ENCODE measurements at regions of chr2 and their contacts with region 1.

Region 1: GRCh38 chr2:231601349-231602229 is 8.9 kb downstream of the TEX44 start:
- DNase-seq: peak; percentile 88
- H3K4me3 Mint-ChIP-seq: no peak overlapping the region
- H3K27ac Mint-ChIP-seq: no peak overlapping the region
- H3K4me1 Mint-ChIP-seq: peaks cover 17% of the 10 kb centered on the region
- H3K27me3 Mint-ChIP-seq: peaks cover 14% of the 10 kb centered on the region

Region 2: GRCh38 chr2:231482806-231483391 is 118.7 kb before region 1 on chr2:
- CTCF ChIA-PET with region 1: interaction called, 16 read pairs
- DNase-seq: peak; percentile 81
- H3K4me3 Mint-ChIP-seq: peak overlapping the region; percentile 77
- H3K27ac Mint-ChIP-seq: peak overlapping the region; percentile 92
- H3K4me1 Mint-ChIP-seq: peaks cover 29% of the 10 kb centered on the region
- H3K27me3 Mint-ChIP-seq: peaks cover 15% of the 10 kb centered on the region

Region 3: GRCh38 chr2:231519975-231520555 is 81.5 kb before region 1 on chr2:
- CTCF ChIA-PET with region 1: interaction called, 64 read pairs
- DNase-seq: no peak
- H3K4me3 Mint-ChIP-seq: no peak overlapping the region
- H3K27ac Mint-ChIP-seq: no peak overlapping the region
- H3K4me1 Mint-ChIP-seq: peaks cover 43% of the 10 kb centered on the region
- H3K27me3 Mint-ChIP-seq: peaks cover 66% of the 10 kb centered on the region

Region 4: GRCh38 chr2:231557571-231558237 is 43.9 kb before region 1 on chr2:
- CTCF ChIA-PET with region 1: interaction called, 60 read pairs
- DNase-seq: peak; percentile 75
- H3K4me3 Mint-ChIP-seq: no peak overlapping the region
- H3K27ac Mint-ChIP-seq: no peak overlapping the region
- H3K4me1 Mint-ChIP-seq: peaks cover 31% of the 10 kb centered on the region
- H3K27me3 Mint-ChIP-seq: peaks cover 38% of the 10 kb centered on the region

Region 5: DNA sequence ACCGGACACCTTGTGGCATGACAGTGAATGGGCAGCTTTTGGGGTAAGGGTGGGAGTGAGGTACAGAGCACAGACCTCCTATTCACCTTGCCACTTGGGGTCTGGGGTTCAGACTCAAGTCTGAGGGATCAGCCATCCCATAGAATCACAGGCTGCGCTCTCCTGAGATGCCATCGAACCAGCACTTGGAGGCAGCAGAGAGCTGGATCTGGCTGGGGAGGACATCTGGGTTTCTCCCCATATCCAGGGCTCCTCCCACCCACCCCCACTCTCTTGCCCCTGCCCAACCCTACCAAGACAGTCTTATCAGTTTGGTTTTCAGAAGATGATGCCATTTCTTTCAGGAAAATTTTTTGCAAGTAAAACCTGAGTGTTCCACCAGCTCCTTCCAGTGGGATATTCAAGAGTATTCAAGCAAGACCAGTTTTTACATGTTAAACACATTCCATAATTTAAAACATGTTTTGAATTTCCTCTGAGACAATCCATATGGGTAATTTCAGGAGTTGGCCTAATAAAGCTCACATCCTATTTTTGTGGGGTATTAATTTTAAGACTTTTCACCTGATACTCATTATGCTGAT is 38.1 kb before region 1 on chr2:
- CTCF ChIA-PET with region 1: interaction called, 60 read pairs
- DNase-seq: peak; percentile 62
- H3K4me3 Mint-ChIP-seq: no peak overlapping the region
- H3K27ac Mint-ChIP-seq: no peak overlapping the region
- H3K4me1 Mint-ChIP-seq: peaks cover 9% of the 10 kb centered on the region
- H3K27me3 Mint-ChIP-seq: peaks cover 23% of the 10 kb centered on the region

Region 6: DNA sequence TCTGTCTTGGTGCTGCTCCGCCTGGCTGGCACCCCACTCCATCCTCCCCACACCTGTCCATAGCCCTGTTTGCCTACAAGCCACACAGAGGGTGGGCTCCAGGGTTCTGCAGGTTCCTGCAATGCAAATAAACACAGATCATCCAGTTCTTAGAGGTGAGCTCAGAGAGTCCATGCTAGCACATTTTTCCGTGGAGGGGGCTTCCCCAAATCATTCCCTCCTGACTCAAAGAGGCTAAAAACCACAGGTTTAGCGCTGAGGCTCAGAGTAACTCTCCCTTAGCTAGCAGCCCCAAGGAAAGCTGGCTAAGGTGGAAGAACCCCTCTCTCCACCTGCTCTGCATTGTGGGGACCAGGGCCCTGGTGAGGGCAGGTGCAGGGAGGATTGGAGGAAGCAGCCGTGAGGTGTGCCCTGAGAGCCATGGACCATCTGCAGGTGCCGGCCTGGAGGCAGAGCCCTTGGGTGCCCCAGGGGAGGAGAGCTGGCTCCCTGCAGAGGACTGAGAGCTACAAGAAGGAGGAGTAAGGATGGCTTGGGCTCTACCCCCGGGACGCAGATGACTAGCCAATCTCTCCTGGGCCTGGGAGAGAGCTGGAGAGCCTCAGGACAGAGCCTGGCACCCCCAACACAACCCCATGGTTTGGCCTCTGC is 32.7 kb before region 1 on chr2:
- CTCF ChIA-PET with region 1: interaction called, 60 read pairs
- DNase-seq: no peak
- H3K4me3 Mint-ChIP-seq: no peak overlapping the region
- H3K27ac Mint-ChIP-seq: peak overlapping the region; percentile 25
- H3K4me1 Mint-ChIP-seq: peaks cover 13% of the 10 kb centered on the region
- H3K27me3 Mint-ChIP-seq: peaks cover 25% of the 10 kb centered on the region

Region 7: DNA sequence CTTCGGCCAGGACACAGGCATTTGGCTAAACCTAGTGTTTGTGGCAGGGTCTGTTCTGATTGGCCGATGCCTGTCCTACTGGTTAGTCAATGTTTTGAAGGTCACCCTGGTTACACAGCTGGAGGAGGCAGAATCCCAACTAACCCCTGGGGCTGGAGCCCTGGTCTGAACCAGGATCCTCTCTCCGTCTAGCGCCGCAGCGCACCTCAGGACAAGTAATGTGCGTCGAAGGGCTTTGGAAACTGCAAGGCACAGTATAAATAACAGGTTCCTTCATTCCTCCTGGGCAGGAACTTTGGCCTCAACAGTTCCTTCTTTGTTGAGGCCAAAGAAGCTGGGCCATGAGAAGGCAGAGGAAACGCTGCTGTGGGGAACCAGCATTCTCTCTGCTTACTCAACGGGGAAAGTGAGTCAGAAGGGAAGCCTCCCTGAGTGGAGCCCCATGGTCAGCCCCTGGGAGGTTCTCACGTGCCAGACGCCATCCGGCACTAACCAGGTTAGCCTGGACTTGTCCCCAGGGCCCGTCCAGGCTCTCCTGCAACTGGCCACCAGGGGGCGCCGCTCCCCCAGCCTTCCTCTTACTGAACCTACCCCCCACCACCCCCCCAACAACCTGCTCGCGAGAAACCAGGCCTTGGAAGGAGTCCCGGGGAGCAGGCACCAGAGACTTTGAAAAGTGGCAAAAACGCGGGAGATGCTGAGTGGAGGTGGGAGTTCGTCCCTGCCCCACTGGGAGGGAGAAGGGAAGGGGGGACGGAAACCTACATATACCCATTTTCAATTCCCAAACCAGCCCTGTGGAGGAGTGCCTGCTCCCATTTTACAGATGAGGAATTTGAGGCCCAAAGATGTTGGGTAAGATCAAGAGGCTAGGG is 10.8 kb after region 1 on chr2:
- CTCF ChIA-PET with region 1: interaction called, 20 read pairs
- DNase-seq: peak; percentile 94
- H3K4me3 Mint-ChIP-seq: peak overlapping the region; percentile 78
- H3K27ac Mint-ChIP-seq: peak overlapping the region; percentile 97
- H3K4me1 Mint-ChIP-seq: peaks cover 64% of the 10 kb centered on the region
- H3K27me3 Mint-ChIP-seq: peaks cover 28% of the 10 kb centered on the region